ENCODE measurements at regions of chr19 and their contacts with region 1.

Region 1: GRCh38 chr19:40640744-40641143 is 39.6 kb downstream of the LTBP4 start:
- DNase-seq: no peak
- H3K4me3 ChIP-seq: no peak overlapping the region
- H3K27ac ChIP-seq: no peak overlapping the region
- H3K4me1 ChIP-seq: no peaks in the 10 kb centered on the region
- H3K27me3 ChIP-seq: no peaks in the 10 kb centered on the region
- CTCF ChIP-seq: no peak
- POLR2A ChIP-seq: no peak

Region 2: DNA sequence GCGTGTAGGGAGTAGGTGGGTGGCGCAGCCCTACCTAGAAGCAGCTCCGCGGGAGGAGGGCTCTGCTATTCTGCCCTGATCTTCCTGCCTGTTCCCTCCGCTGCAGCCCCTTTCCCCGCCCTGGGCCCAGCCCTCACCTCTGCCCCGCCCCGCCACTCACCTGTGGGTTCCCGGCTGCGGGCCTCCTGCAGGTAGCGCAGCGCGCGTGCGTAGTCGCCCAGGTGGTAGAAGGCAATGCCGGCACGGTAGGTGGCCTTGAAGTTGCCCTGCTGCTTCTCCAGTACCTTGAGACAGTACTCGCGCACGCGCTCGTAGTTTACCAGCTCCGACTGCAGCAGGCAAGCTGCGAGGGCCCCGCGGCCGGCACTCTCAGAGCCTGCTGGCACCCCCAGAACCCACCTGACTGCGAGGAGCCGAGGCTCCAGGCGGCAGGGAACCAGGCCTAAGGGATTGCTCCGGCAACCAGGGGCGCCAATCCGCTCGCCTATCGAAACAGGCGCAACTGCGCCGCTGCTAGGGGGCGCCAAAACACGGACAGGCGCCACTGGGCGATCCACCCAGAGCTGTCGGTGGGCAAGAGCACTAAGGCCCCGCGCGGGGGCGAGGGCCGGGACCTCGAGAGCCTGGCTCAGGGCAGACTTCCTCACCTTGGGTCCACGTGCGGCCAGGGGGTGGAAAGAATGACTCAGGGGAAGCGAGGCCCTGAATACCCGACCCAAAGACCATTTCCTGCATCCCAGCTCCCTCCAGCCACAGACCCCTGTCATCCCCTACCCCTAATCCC is 423.5 kb before region 1 on chr19:
- intact Hi-C with region 1: no loop called
- DNase-seq: peak; percentile 40
- H3K4me3 ChIP-seq: peak overlapping the region in 1 of 2 donors; percentile 3
- H3K27ac ChIP-seq: no peak overlapping the region
- H3K4me1 ChIP-seq: no peaks in the 10 kb centered on the region
- H3K27me3 ChIP-seq: peaks cover 7% of the 10 kb centered on the region
- CTCF ChIP-seq: peak in 1 of 4 experiments; percentile 38
- POLR2A ChIP-seq: no peak

Region 3: GRCh38 chr19:40603389-40604135 is 37.2 kb before region 1 on chr19:
- intact Hi-C with region 1: loop called (anchors 2 kb)
- DNase-seq: peak; percentile 98
- H3K4me3 ChIP-seq: peak overlapping the region; percentile 20 to 30
- H3K27ac ChIP-seq: peak overlapping the region; percentile 81 to 87
- H3K4me1 ChIP-seq: peaks cover 23% of the 10 kb centered on the region
- H3K27me3 ChIP-seq: no peaks in the 10 kb centered on the region
- CTCF ChIP-seq: peak in 1 of 4 experiments; percentile 12
- POLR2A ChIP-seq: peak; percentile 81